ENCODE measurements at regions of chr5 and their contacts with region 1.

Region 1: DNA sequence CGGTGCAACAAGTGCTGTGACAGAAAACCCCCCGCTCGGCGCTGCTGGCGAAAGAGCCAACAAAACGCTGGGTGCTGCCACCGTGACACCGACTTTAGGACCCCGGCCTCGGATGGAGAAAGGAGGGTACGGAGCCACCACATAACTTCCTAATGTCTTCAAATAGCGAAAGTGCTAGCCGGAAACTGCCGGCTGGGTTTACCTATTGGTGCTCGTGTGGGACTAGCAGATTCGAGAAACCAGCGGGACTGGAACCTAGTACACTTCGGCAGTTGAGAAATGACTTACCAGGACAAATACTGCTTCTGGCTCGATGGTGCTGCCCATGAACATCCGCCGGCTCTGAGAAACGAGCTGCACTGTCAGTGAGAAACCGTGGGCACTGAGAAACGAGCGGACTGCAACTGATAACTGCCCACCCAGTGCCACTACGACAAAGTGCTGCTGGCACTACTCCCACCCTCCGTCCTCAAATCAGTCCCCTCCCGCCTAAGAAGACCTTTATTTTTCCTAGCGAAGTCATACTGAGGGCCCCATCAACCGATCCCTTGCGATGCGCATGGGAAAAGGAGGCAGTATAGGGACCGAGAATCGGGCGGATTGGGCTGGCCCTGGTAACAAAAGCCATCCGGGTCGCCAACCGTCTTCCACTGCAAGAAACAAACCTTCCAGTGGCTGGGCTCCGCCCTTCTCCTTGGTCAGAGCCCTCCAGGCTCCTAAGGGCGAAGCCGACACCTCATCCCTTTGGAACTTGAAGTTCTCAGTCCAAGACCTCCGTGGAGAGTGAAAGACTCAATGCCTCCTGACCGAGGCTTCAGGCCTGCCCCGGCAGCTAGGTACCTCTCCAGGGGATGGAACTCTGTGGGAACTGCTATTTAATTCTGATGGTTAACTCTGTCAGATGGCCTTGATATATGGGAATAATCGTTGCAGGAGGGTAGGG is 27.0 kb upstream of the ANXA2R start:
- DNase-seq: peak; percentile 77 to 94 (median 88)
- ATAC-seq: peak; percentile 50 to 64 (median 60)
- H3K4me3 ChIP-seq: peak overlapping the region; percentile 92 to 100
- H3K4me3 Mint-ChIP-seq: peak overlapping the region; percentile 95 to 98 (median 96)
- H3K27ac ChIP-seq: peak overlapping the region; percentile 91
- H3K27ac Mint-ChIP-seq: peak overlapping the region; percentile 99 to 100
- H3K4me1 ChIP-seq: peaks cover 22 to 55% of the 10 kb centered on the region in 2 experiments
- H3K4me1 Mint-ChIP-seq: peaks cover 47 to 60% (median 50%) of the 10 kb centered on the region in 3 donors
- H3K27me3 ChIP-seq: no peaks in the 10 kb centered on the region
- H3K27me3 Mint-ChIP-seq: no peaks in the 10 kb centered on the region

Region 2: GRCh38 chr5:42423285-42424165 is 643.5 kb before region 1 on chr5 and contains the start of gene GHR:
- CTCF ChIA-PET with region 1: no interaction called
- POLR2A ChIA-PET with region 1: no interaction called
- DNase-seq: peak in 1 of 35 experiments; percentile 9
- ATAC-seq: peak in 3 of 4 experiments; percentile 21 to 33 (median 32)
- H3K4me3 ChIP-seq: peak within 1 kb of the TSS; percentile 21 to 35
- H3K4me3 Mint-ChIP-seq: no peak within 1 kb of the TSS
- H3K27ac ChIP-seq: no peak within 1 kb of the TSS
- H3K27ac Mint-ChIP-seq: no peak within 1 kb of the TSS
- H3K4me1 ChIP-seq: peaks cover 0 to 15% of the 10 kb centered on the region in 2 experiments
- H3K4me1 Mint-ChIP-seq: no peaks in the 10 kb centered on the region
- H3K27me3 ChIP-seq: peaks cover 5 to 25% of the 10 kb centered on the region in 2 experiments
- H3K27me3 Mint-ChIP-seq: peaks cover 24 to 37% of the 10 kb centered on the region in 2 donors
- total RNA-seq, gene GHR: 0.06 TPM in 1 of 5 donors, not detected in the others

Region 3: GRCh38 chr5:42908509-42909488 is 158.3 kb before region 1 on chr5:
- CTCF ChIA-PET with region 1: interaction called, 3 to 11 read pairs
- POLR2A ChIA-PET with region 1: interaction called in 1 of 2 experiments, 5 read pairs
- DNase-seq: peak; percentile 76 to 96 (median 87)
- ATAC-seq: peak; percentile 88 to 94 (median 92)
- H3K4me3 ChIP-seq: peak overlapping the region; percentile 56 to 61
- H3K4me3 Mint-ChIP-seq: peak overlapping the region; percentile 88 to 98 (median 91)
- H3K27ac ChIP-seq: peak overlapping the region; percentile 38
- H3K27ac Mint-ChIP-seq: peak overlapping the region; percentile 87 to 97
- H3K4me1 ChIP-seq: peaks cover 0 to 12% of the 10 kb centered on the region in 2 experiments
- H3K4me1 Mint-ChIP-seq: peaks cover 11 to 17% (median 16%) of the 10 kb centered on the region in 3 donors
- H3K27me3 ChIP-seq: peaks cover 0 to 3% of the 10 kb centered on the region in 2 experiments
- H3K27me3 Mint-ChIP-seq: peaks cover 3 to 7% of the 10 kb centered on the region in 2 donors

Region 4: GRCh38 chr5:42994246-42995151 is 72.6 kb before region 1 on chr5:
- CTCF ChIA-PET with region 1: interaction called, 4 to 12 read pairs
- POLR2A ChIA-PET with region 1: interaction called, 4 to 11 read pairs
- DNase-seq: peak; percentile 73 to 91 (median 82)
- ATAC-seq: peak; percentile 62 to 72 (median 66)
- H3K4me3 ChIP-seq: peak overlapping the region; percentile 83 to 95
- H3K4me3 Mint-ChIP-seq: peak overlapping the region; percentile 99 to 100 (median 100)
- H3K27ac ChIP-seq: peak overlapping the region; percentile 89
- H3K27ac Mint-ChIP-seq: peak overlapping the region; percentile 100
- H3K4me1 ChIP-seq: peaks cover 22 to 32% of the 10 kb centered on the region in 2 experiments
- H3K4me1 Mint-ChIP-seq: peaks cover 29 to 37% (median 35%) of the 10 kb centered on the region in 3 donors
- H3K27me3 ChIP-seq: no peaks in the 10 kb centered on the region
- H3K27me3 Mint-ChIP-seq: no peaks in the 10 kb centered on the region

Region 5: GRCh38 chr5:43019614-43020293 is 47.3 kb before region 1 on chr5:
- CTCF ChIA-PET with region 1: interaction called, 3 to 5 read pairs
- POLR2A ChIA-PET with region 1: interaction called in 1 of 2 experiments, 42 read pairs
- DNase-seq: peak; percentile 65 to 95 (median 86)
- ATAC-seq: peak; percentile 67 to 74 (median 70)
- H3K4me3 ChIP-seq: peak overlapping the region; percentile 70 to 92
- H3K4me3 Mint-ChIP-seq: peak overlapping the region; percentile 90 to 98 (median 98)
- H3K27ac ChIP-seq: peak overlapping the region; percentile 98
- H3K27ac Mint-ChIP-seq: peak overlapping the region; percentile 98 to 100
- H3K4me1 ChIP-seq: peaks cover 31 to 35% of the 10 kb centered on the region in 2 experiments
- H3K4me1 Mint-ChIP-seq: peaks cover 41 to 46% (median 42%) of the 10 kb centered on the region in 3 donors
- H3K27me3 ChIP-seq: no peaks in the 10 kb centered on the region
- H3K27me3 Mint-ChIP-seq: no peaks in the 10 kb centered on the region

Region 6: DNA sequence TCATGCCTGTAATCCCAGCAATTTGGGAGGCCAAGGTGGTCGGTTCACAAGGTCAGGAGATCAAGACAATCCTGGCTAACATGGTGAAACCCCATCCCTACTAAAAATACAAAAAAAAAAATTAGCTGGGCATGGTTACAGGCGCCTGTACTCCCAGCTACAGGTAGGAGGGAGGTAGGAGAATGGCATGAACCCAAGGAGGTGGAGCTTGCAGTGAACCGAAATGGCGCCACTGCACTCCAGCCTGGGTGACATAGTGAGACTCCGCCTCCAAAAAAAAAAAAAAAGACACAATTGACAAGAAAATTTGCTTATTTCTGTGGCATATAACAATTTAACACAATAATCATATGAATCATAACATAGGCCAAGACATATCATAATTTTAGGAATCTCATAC is 18.4 kb after region 1 on chr5:
- CTCF ChIA-PET with region 1: interaction called in 1 of 2 experiments, 3 read pairs
- POLR2A ChIA-PET with region 1: interaction called in 1 of 2 experiments, 14 read pairs
- DNase-seq: no peak
- ATAC-seq: no peak
- H3K4me3 ChIP-seq: no peak overlapping the region
- H3K4me3 Mint-ChIP-seq: no peak overlapping the region
- H3K27ac ChIP-seq: no peak overlapping the region
- H3K27ac Mint-ChIP-seq: no peak overlapping the region
- H3K4me1 ChIP-seq: no peaks in the 10 kb centered on the region
- H3K4me1 Mint-ChIP-seq: no peaks in the 10 kb centered on the region
- H3K27me3 ChIP-seq: no peaks in the 10 kb centered on the region
- H3K27me3 Mint-ChIP-seq: no peaks in the 10 kb centered on the region

Region 7: GRCh38 chr5:43215073-43215631 is 148.1 kb after region 1 on chr5:
- CTCF ChIA-PET with region 1: interaction called in 1 of 2 experiments, 16 read pairs
- POLR2A ChIA-PET with region 1: no interaction called
- DNase-seq: no peak
- ATAC-seq: no peak
- H3K4me3 ChIP-seq: no peak overlapping the region
- H3K4me3 Mint-ChIP-seq: no peak overlapping the region
- H3K27ac ChIP-seq: no peak overlapping the region
- H3K27ac Mint-ChIP-seq: no peak overlapping the region
- H3K4me1 ChIP-seq: no peaks in the 10 kb centered on the region
- H3K4me1 Mint-ChIP-seq: no peaks in the 10 kb centered on the region
- H3K27me3 ChIP-seq: no peaks in the 10 kb centered on the region
- H3K27me3 Mint-ChIP-seq: peaks cover 5 to 10% of the 10 kb centered on the region in 2 donors